ENCODE measurements at regions of chr1 and their contacts with region 1.

Region 1: DNA sequence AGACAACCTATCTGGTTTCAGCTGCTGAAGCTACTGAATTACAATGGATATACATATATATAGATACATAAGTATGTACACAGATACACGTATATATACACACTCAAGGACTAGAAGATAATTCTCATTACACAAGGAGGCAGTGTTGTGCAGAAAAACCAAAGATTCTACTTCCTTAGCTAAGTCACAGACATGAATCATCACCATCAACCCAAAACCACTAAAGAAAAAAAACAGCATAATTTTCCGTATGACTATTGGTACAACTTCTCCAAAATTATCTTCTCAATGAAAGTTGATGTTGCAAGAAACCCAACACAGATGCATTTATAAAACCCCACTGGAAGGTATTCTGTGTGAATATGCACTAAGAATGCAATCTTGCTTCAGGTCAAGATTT is 36.8 kb upstream of the RPF1 start:
- DNase-seq: peak; percentile 88 to 97 (median 94)
- H3K4me3 ChIP-seq: no peak overlapping the region
- H3K4me3 Mint-ChIP-seq: no peak overlapping the region
- H3K27ac ChIP-seq: peak overlapping the region in 1 of 2 donors; percentile 45
- H3K27ac Mint-ChIP-seq: peak overlapping the region; percentile 79 to 95 (median 89)
- H3K4me1 ChIP-seq: peaks cover 22 to 27% of the 10 kb centered on the region in 2 donors
- H3K4me1 Mint-ChIP-seq: peaks cover 19% of the 10 kb centered on the region
- H3K27me3 ChIP-seq: no peaks in the 10 kb centered on the region
- H3K27me3 Mint-ChIP-seq: no peaks in the 10 kb centered on the region
- CTCF ChIP-seq: peak; percentile 73

Region 2: DNA sequence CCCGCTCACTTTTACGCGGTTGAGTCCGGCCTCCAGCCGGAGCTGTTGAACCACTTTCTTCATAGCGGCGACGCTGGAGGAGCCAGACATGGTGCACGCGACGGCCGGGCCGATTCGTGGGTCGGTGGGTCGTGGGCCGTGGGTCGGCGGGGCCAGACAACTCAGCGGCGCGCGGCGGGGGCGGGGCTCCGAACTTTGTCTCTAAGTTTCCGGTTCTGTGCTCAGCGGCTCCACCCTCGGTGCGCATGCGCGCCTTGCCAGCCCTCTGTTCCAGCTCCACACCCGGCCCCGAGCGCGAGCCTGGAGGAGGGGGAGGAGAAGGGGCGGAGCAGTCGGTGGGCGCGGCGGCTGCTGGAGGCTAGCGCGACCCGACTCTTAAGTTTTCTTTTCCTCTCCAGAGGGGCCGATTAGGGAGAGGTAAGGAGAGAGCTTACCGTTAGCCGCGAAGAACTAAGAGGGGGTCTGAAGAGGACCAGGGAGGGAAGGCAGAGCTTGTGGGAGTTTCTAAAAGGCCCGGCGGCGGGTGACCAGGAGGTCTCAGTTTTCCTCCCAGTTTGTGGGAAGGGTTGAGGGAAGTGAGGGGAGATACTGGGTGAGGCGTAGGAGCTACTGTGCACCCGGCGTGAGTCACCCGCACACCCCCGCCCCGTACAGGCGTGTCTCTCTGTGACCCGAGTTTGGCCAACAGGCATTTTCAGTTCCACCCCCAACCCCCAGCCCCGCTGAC is 63.9 kb after region 1 on chr1 and contains the starts of genes GNG5 and SPATA1:
- intact Hi-C with region 1: loop called (anchors 5 to 10 kb)
- DNase-seq: peak; percentile 95 to 98 (median 98)
- H3K4me3 ChIP-seq: peak within 1 kb of the TSS; percentile 78 to 99 (median 97)
- H3K4me3 Mint-ChIP-seq: peak within 1 kb of the TSS; percentile 98 to 100
- H3K27ac ChIP-seq: peak within 1 kb of the TSS; percentile 94 to 97
- H3K27ac Mint-ChIP-seq: peak within 1 kb of the TSS; percentile 98 to 100 (median 100)
- H3K4me1 ChIP-seq: peaks cover 26 to 42% of the 10 kb centered on the region in 2 donors
- H3K4me1 Mint-ChIP-seq: peaks cover 30% of the 10 kb centered on the region
- H3K27me3 ChIP-seq: no peaks in the 10 kb centered on the region
- H3K27me3 Mint-ChIP-seq: no peaks in the 10 kb centered on the region
- CTCF ChIP-seq: no peak
- polyA plus RNA-seq, gene GNG5: 135 to 555 (median 377) TPM
- polyA plus RNA-seq, gene SPATA1: 0.40 to 1.9 (median 0.43) TPM

Region 3: DNA sequence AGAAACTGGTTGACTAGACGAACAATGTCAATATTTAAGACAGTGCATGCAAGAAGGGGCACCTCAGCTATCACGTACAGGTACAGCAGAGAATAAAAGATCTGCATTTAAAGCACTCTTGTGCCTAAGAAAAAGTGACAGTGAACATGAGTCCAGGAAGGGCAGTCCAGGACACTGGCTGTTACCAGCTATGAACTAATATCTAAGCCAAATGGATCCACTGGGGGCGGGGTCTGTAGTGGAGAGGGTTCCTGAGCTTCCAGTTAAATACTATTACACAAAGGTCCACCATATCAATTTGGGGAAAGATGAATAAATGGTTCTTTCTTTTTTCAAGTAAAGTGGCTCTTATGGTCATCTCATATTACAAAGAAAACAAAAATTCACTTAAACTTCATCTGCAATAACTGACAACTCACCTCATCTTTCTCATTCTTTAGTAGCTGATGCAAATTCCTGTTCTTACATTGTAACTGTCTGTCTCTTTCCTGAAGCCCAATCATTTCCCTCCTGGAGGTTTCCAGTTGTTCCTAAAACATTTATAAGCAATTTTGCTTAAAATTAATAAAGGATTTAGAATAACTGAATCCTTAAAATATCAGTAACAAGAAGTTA is 223.6 kb after region 1 on chr1:
- intact Hi-C with region 1: no loop called
- DNase-seq: no peak
- H3K4me3 ChIP-seq: no peak overlapping the region
- H3K4me3 Mint-ChIP-seq: no peak overlapping the region
- H3K27ac ChIP-seq: no peak overlapping the region
- H3K27ac Mint-ChIP-seq: no peak overlapping the region
- H3K4me1 ChIP-seq: no peaks in the 10 kb centered on the region
- H3K4me1 Mint-ChIP-seq: no peaks in the 10 kb centered on the region
- H3K27me3 ChIP-seq: no peaks in the 10 kb centered on the region
- H3K27me3 Mint-ChIP-seq: no peaks in the 10 kb centered on the region
- CTCF ChIP-seq: no peak

Region 4: DNA sequence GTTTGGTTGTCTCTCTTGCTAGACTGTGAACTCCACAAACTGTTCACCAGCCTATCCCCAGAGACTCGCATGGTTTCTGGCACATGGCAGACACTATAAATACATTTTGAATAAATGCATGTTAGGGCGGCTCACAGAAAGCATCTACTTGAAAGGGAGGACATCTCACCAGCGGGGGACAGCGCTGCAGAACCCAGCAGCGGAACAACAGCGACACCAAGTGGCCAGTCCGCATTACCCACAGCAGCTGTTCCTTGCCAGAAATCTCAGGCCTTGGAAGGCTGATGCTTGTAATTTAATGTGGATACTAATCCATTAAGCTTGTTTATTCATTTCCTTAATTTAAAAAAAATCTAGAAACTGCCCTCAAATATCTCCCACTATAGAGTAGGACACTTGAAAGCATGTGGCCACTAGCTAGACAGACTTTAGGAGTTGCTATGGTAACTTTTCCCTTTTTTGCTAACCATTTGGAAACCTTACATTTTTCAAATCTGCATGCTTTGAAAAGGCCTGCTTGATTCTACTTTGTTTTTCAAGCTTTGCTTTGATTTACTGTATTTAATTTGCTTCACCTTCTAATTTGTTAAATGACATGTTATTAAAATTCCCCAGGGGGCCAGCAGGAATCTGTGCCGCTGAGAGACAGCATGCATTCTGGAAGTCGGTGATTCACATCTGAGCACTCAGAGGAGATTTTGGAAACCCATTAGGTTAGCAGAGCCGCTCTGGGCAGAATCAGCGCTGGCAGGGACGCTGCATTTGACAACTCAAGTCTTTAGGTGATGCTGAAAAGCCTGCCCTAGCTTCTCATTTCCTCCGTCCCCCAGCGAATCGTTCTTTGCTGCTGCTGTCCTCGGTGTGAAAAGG is 311.5 kb after region 1 on chr1:
- intact Hi-C with region 1: loop called in 1 of 2 experiments (anchors 10 kb)
- DNase-seq: peak; percentile 25 to 57 (median 46)
- H3K4me3 ChIP-seq: no peak overlapping the region
- H3K4me3 Mint-ChIP-seq: no peak overlapping the region
- H3K27ac ChIP-seq: no peak overlapping the region
- H3K27ac Mint-ChIP-seq: no peak overlapping the region
- H3K4me1 ChIP-seq: peaks cover 2% of the 10 kb centered on the region in 2 donors
- H3K4me1 Mint-ChIP-seq: peaks cover 5% of the 10 kb centered on the region
- H3K27me3 ChIP-seq: no peaks in the 10 kb centered on the region
- H3K27me3 Mint-ChIP-seq: peaks cover 3 to 10% (median 6%) of the 10 kb centered on the region in 3 donors
- CTCF ChIP-seq: peak; percentile 95

Measured in CD14-positive monocyte (primary cell).